H1 (cell line): ENCODE measurements at regions of chr5 and their contacts with region 1.

Region 1: DNA sequence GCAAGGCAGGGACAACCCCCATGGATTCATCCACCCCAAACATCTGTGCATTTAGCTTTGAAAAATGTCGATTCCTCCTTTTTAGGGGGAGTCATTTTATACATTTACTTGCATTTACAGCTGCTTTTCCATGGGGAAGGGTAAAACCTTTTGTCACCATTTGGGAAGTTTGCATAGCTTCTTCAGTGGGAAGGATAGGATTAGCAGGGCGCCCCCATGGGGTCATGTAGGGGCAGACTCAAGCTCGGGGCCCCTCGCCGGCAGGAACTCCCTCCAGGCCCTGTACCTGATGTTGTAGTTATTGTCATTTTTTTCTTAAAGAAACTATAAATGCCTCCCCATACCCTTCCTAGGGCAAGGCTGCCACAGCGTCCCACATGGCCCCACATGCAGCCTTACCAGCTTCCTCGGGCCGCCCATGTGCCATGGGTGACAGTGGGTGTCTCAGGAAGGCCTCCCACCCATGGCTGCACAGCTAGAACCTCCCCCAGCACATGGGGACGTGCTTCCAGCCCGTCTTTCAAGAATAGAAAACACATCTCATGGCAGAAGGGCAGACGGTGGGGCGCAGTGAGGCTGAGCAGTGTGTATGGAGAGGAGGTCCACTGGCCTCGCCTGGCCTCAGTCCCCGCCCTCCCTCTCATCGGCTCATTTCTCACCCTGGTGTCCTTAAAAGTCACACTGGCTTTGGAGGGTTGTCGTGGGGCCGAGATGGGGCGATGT is 76.1 kb upstream of the OTULINL start:
- DNase-seq: no peak
- H3K4me3 ChIP-seq: no peak overlapping the region
- H3K27ac ChIP-seq: no peak overlapping the region
- H3K4me1 ChIP-seq: no peaks in the 10 kb centered on the region; a peak in 1 of 7 replicates
- H3K27me3 ChIP-seq: no peaks in the 10 kb centered on the region
- CTCF ChIP-seq: peak; percentile 46 to 57 (median 48)
- EP300 ChIP-seq: no peak
- POLR2A ChIP-seq: no peak
- RAD21 ChIP-seq: peak; percentile 37 to 50

Region 2: DNA sequence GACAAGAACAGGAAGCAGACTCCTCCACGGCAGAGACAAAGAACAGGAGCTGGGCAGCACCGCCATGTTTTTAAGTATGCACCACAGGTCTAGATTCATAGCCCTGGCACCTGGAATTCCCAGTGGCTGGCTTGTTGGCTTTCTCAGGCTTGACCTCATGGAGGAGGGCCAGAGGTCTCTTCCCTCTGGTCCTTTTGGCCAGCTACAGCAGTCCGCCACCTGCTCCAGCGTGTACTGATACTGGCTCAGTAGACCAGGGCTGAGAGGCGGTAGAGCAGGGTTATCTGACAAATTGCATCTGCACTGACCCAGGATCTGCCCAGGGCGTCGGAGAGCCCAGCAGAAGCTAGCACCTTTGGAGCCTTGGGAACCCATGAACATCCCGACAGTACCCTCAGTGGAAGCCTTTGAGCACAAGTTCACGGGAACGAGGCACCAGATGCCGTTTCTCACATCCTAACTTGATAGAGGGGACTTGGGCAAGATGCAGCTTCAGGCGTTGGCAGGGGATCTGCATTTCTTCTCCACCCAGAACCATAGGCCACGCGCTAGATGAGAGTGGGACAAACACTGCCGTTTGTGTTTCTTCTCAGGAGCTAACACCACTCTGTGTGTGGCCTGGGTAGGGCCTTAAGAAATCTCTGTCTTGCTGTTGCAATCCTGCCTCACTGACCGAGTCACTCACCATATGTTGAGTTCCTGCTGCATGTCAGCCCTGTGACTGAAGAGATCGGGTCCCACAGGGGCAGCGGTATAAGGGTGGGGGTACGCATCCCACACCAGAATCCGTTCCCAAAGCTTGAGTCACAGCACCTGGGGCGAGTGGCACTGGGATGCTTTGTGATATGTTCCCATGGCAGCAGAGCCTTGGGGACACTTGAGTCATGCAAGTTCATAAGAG is 14.2 kb before region 1 on chr5:
- CTCF ChIA-PET with region 1: interaction called, 16 read pairs
- POLR2A ChIA-PET with region 1: interaction called, 3 read pairs
- DNase-seq: no peak
- H3K4me3 ChIP-seq: no peak overlapping the region
- H3K27ac ChIP-seq: no peak overlapping the region
- H3K4me1 ChIP-seq: no peaks in the 10 kb centered on the region
- H3K27me3 ChIP-seq: no peaks in the 10 kb centered on the region
- CTCF ChIP-seq: no peak
- EP300 ChIP-seq: no peak
- POLR2A ChIP-seq: no peak
- RAD21 ChIP-seq: no peak

Region 3: GRCh38 chr5:14608169-14608568 is 102.7 kb after region 1 on chr5:
- CTCF ChIA-PET with region 1: no interaction called
- POLR2A ChIA-PET with region 1: no interaction called
- DNase-seq: no peak
- H3K4me3 ChIP-seq: no peak overlapping the region
- H3K27ac ChIP-seq: no peak overlapping the region
- H3K4me1 ChIP-seq: no peaks in the 10 kb centered on the region
- H3K27me3 ChIP-seq: no peaks in the 10 kb centered on the region
- CTCF ChIP-seq: no peak
- EP300 ChIP-seq: no peak
- POLR2A ChIP-seq: no peak
- RAD21 ChIP-seq: no peak

Region 4: GRCh38 chr5:14925326-14925725 is 419.9 kb after region 1 on chr5:
- CTCF ChIA-PET with region 1: no interaction called
- POLR2A ChIA-PET with region 1: no interaction called
- DNase-seq: no peak
- H3K4me3 ChIP-seq: no peak overlapping the region
- H3K27ac ChIP-seq: no peak overlapping the region
- H3K4me1 ChIP-seq: no peaks in the 10 kb centered on the region
- H3K27me3 ChIP-seq: no peaks in the 10 kb centered on the region
- CTCF ChIP-seq: no peak
- EP300 ChIP-seq: no peak
- POLR2A ChIP-seq: no peak
- RAD21 ChIP-seq: no peak